ENCODE measurements at regions of chr14 and their contacts with region 1.

Region 1: DNA sequence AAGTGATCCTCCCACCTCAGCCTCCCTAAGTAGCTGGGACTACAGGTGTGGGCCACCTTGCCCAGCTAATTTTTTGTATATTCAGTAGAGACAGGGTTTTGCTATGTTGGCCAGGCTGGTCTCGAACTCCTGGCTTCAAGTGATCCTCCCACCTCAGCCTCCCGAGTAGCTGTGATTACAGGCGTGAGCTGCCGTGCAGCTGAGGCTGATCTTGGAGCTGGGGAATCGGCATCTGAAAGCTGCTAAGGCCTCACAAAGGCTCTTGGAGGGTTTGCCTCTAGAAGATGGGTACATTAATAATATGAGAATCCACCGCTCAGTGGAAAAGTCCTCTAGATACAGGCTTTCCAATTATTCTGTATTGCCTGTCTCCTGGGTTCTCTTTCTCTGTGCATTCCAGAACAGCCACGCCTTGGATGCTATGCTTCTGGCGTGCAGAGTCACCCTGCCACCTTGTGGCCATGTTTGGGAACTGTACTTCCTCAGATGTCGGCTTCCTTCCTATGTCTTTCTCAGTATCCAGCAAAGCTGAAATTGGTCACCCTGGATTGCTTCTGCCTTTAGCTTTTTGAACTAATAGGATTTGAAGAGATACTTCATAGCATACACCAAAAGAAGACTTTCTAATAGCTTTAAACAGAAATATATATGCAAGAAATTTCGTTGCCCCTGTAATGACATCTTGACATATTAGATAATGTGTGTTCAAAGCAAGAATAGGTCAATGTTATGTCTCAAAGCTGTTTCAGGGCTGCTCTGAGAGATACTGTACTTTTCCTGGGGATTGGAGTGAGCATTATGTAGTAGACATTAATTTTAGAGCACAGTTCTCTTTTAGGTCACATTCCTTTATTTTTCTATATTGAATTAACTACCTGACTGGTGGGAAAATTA is 75.4 kb downstream of the SNAPC1 start:
- DNase-seq: peak; percentile 81
- H3K4me3 ChIP-seq: no peak overlapping the region
- H3K27ac ChIP-seq: no peak overlapping the region
- H3K4me1 ChIP-seq: no peaks in the 10 kb centered on the region
- H3K27me3 ChIP-seq: peaks cover 7% of the 10 kb centered on the region
- CTCF ChIP-seq: peak; percentile 87 to 94 (median 92)
- EP300 ChIP-seq: no peak
- POLR2A ChIP-seq: no peak

Region 2: DNA sequence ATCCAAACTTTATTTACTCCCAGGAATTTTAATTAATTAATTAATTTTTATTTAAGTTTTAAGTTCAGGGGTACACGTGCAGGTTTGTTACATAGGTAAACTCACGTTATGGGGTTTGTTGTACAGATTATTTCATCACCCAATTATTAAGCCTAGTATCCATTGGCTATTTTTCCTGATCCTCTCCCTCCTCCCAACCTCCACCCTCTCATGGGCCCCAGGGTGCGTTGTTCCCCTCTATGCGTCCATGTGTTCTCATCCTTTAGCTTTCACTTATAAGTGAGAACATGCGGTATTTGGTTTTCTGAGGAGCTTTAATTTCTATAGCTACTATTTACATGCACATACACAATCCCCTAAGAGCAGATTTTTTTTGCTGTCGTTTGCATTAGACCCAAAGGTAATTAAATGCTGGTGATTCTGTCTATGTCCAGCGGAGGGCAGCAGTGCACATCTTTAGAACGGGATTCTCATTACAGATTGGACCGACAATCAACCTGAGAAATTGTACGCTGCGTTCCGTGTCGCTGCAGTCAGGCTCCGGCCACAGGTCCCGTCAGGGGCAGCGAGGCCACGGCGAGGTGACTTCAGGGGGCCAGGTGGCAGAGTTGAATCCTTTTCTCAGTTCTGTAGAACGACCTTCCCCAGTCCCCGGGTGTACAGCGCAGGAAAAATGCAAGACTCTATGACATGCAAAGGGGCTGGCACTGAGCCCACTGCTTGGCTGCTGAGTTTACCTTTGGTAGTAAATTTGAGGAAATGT is 568.1 kb before region 1 on chr14:
- in situ Hi-C with region 1: loop called in 1 of 4 experiments (anchors 10 kb)
- intact Hi-C with region 1: no loop called
- DNase-seq: peak; percentile 83
- H3K4me3 ChIP-seq: peak overlapping the region in 3 of 4 donors; percentile 10 to 28 (median 16)
- H3K27ac ChIP-seq: no peak overlapping the region
- H3K4me1 ChIP-seq: peaks cover 0 to 12% (median 5%) of the 10 kb centered on the region in 4 donors
- H3K27me3 ChIP-seq: peaks cover 42% of the 10 kb centered on the region
- CTCF ChIP-seq: peak; percentile 71 to 82 (median 76)
- EP300 ChIP-seq: no peak
- POLR2A ChIP-seq: no peak

Region 3: DNA sequence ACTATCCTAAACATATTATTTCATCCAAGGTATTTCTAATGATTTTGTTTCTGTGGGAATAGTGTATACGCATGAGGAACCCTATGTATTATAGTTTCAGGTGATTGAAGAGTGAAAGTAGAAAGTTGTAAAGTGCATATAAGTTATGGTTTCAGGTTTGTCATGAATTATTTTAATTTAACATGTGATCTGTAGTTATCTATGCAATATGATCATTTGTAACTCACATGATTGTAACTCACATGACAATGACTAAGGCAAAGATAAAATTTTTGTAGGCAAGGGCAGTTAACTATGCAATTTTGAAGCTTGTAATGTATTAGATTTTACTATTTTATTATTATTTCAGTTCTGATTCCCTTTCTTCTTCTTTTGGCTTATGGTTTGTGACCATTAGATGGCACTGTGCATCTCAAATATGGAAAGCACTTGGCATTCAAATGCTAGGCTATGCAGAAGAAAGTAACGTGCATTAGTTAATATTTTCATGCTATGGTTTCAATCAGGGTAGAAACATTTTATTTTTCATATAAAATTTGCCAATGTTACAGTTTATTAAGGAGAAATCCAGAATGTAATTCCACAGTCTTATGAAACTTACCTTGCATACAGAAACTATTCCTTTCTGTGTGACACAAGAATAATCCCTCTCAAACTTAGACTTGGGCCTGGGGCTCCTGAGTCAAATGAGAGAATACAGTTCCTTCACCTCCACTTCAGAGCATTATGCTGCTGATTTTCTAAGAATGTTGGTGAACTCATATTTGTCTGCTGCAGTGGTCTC is 540.7 kb before region 1 on chr14:
- in situ Hi-C with region 1: loop called in 2 of 4 experiments (anchors 10 to 25 kb)
- intact Hi-C with region 1: no loop called
- DNase-seq: no peak
- H3K4me3 ChIP-seq: no peak overlapping the region
- H3K27ac ChIP-seq: no peak overlapping the region
- H3K4me1 ChIP-seq: peaks cover 4 to 10% (median 7%) of the 10 kb centered on the region in 4 donors
- H3K27me3 ChIP-seq: no peaks in the 10 kb centered on the region
- CTCF ChIP-seq: peak; percentile 30 to 55 (median 53)
- EP300 ChIP-seq: no peak
- POLR2A ChIP-seq: no peak

Region 4: GRCh38 chr14:61308198-61308597 is 529.4 kb before region 1 on chr14:
- in situ Hi-C with region 1: loop called in 1 of 4 experiments (anchors 10 kb)
- intact Hi-C with region 1: no loop called
- DNase-seq: no peak
- H3K4me3 ChIP-seq: no peak overlapping the region
- H3K27ac ChIP-seq: no peak overlapping the region
- H3K4me1 ChIP-seq: no peaks in the 10 kb centered on the region
- H3K27me3 ChIP-seq: no peaks in the 10 kb centered on the region
- CTCF ChIP-seq: no peak
- EP300 ChIP-seq: no peak
- POLR2A ChIP-seq: no peak

Region 5: DNA sequence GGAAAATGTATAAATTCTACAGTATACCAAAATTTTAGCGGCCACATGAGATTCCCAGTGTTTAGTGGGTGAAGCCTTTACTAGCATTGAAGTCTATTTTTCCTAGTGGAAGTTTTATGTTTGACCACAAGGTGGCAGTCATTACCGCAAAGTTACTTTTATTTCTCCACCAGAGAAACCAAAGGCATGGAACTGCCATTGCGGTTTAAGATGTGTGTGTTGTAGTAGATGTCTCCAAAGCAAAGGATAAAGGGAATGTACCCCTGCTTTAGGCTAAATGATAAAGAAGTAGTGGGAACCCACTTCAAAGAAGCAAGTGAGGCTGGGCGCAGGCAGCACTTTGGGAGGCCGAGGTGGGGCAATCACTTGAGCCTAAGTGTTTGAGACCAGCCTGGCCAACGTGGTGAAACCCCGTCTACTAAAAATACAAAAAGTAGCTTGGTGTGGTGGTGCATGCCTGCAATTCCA is 375.7 kb before region 1 on chr14:
- in situ Hi-C with region 1: loop called in 3 of 4 experiments (anchors 5 kb)
- intact Hi-C with region 1: loop called (anchors 2 kb)
- DNase-seq: no peak
- H3K4me3 ChIP-seq: no peak overlapping the region
- H3K27ac ChIP-seq: no peak overlapping the region
- H3K4me1 ChIP-seq: peaks cover 0 to 18% (median 4%) of the 10 kb centered on the region in 4 donors
- H3K27me3 ChIP-seq: no peaks in the 10 kb centered on the region
- CTCF ChIP-seq: peak; percentile 76 to 86 (median 81)
- EP300 ChIP-seq: no peak
- POLR2A ChIP-seq: no peak

Measured in transverse colon (tissue), 4 donors.